ENCODE measurements at regions of chr6 and their contacts with region 1.

Region 1: GRCh38 chr6:137866914-137867684 is at the start of gene TNFAIP3:
- DNase-seq: peak; percentile 91 to 98 (median 95)
- ATAC-seq: peak; percentile 72
- H3K4me3 ChIP-seq: peak within 1 kb of the TSS; percentile 75 to 79
- H3K4me3 Mint-ChIP-seq: peak within 1 kb of the TSS; percentile 98
- H3K27ac ChIP-seq: peak within 1 kb of the TSS; percentile 95 to 96
- H3K27ac Mint-ChIP-seq: peak within 1 kb of the TSS; percentile 99
- H3K4me1 ChIP-seq: peaks cover 43% of the 10 kb centered on the region
- H3K4me1 Mint-ChIP-seq: peaks cover 47% of the 10 kb centered on the region
- H3K27me3 ChIP-seq: no peaks in the 10 kb centered on the region
- H3K27me3 Mint-ChIP-seq: no peaks in the 10 kb centered on the region
- CTCF ChIP-seq: peak; percentile 69
- total RNA-seq, gene TNFAIP3: 3,739 to 3,807 TPM

Region 2: GRCh38 chr6:136685540-136686108 is 1181.5 kb before region 1 on chr6:
- CTCF ChIA-PET with region 1: no interaction called
- POLR2A ChIA-PET with region 1: no interaction called
- intact Hi-C with region 1: no loop called
- DNase-seq: no peak
- ATAC-seq: no peak
- H3K4me3 ChIP-seq: no peak overlapping the region
- H3K4me3 Mint-ChIP-seq: no peak overlapping the region
- H3K27ac ChIP-seq: no peak overlapping the region
- H3K27ac Mint-ChIP-seq: peak overlapping the region; percentile 45
- H3K4me1 ChIP-seq: no peaks in the 10 kb centered on the region
- H3K4me1 Mint-ChIP-seq: peaks cover 7% of the 10 kb centered on the region
- H3K27me3 ChIP-seq: no peaks in the 10 kb centered on the region
- H3K27me3 Mint-ChIP-seq: no peaks in the 10 kb centered on the region
- CTCF ChIP-seq: no peak

Region 3: DNA sequence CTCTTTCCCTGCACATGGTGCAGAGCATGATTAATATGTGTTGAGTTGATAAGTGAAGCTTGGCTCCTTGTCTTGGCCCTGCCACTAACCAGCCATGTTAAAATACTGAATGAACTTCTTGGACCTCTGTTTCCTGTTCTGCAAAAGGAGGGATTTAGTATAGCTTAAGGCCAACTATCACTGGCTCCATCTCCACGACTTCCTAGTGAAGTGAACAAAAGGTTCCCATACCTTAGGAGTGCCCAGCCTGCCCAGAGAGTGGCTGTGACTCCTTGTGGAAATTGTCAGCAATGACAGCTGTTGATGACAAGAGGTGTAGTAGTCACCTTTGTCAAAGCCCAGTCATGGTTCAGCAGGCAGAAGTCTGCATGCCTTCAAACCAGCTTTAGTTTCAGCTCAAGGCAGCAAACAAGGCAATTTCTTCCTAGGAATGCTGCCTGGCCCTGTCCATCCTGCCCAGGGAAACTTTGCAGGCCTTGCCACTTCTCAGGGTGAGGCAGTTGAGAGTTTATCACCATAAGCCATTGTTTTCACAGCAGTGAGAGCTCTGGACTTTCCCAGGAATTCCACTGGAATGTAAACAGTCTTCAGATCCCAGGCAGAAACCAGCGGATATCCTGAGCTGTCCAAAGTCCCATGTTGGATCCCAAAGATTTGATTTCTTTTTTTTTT is 169.7 kb before region 1 on chr6:
- CTCF ChIA-PET with region 1: no interaction called
- POLR2A ChIA-PET with region 1: no interaction called
- intact Hi-C with region 1: no loop called
- DNase-seq: no peak
- ATAC-seq: no peak
- H3K4me3 ChIP-seq: no peak overlapping the region
- H3K4me3 Mint-ChIP-seq: no peak overlapping the region
- H3K27ac ChIP-seq: no peak overlapping the region
- H3K27ac Mint-ChIP-seq: no peak overlapping the region
- H3K4me1 ChIP-seq: peaks cover 12% of the 10 kb centered on the region
- H3K4me1 Mint-ChIP-seq: peaks cover 14% of the 10 kb centered on the region
- H3K27me3 ChIP-seq: no peaks in the 10 kb centered on the region
- H3K27me3 Mint-ChIP-seq: peaks cover 2% of the 10 kb centered on the region
- CTCF ChIP-seq: no peak

Region 4: DNA sequence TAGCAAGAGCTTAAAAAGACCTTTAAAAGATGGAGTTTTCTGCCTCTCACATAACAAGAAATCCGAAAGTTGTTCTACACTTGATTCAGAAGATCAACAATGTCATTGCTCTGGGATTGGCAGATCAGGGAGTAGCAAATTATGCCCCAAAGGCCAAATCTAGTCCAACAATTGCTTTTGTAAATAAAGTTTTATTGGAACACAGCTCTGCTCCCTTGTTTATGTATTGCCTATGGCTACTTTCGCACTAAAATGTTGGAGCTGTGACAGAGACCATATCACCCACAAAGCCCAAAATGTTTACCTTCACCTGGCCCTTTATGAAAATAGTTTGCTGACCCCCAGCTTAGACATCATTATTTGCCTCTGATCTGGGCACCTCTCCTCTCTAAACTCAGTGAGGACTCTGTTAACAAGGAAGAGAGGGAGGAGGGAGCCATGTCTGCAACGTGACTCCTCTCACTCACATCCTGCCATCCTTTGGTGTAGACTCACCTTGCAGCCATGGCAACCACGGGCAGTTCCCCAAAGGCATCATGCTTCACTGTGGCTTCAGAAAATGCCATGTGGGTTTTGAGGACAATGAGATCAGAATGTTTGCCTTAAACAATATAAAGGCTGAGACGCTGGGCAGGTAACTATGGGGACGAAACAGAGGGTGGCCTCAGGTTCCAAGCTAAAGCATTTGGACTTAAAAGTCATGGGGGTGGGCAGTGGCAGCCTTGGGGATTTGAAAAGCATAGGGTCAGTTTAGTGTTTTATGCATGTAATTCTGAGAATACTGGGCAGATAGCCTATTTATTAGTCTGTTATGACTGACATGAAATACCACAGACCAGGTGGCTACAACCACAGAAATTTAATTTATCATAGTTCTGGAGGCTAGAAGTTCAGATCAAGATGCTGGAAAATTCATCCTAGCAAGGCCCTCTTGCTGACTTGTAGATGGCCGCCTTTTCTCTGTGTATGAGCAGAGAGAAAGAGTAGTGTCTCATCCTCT is 149.7 kb before region 1 on chr6:
- CTCF ChIA-PET with region 1: interaction called, 13 read pairs
- POLR2A ChIA-PET with region 1: interaction called, 19 read pairs
- intact Hi-C with region 1: no loop called
- DNase-seq: peak; percentile 57 to 95 (median 79)
- ATAC-seq: peak; percentile 50
- H3K4me3 ChIP-seq: no peak overlapping the region
- H3K4me3 Mint-ChIP-seq: peak overlapping the region; percentile 46
- H3K27ac ChIP-seq: peak overlapping the region; percentile 5 to 16
- H3K27ac Mint-ChIP-seq: peak overlapping the region; percentile 95
- H3K4me1 ChIP-seq: peaks cover 28% of the 10 kb centered on the region
- H3K4me1 Mint-ChIP-seq: peaks cover 47% of the 10 kb centered on the region
- H3K27me3 ChIP-seq: no peaks in the 10 kb centered on the region
- H3K27me3 Mint-ChIP-seq: no peaks in the 10 kb centered on the region
- CTCF ChIP-seq: no peak

Region 5: GRCh38 chr6:137823826-137824555 is 43.1 kb before region 1 on chr6:
- CTCF ChIA-PET with region 1: interaction called, 13 read pairs
- POLR2A ChIA-PET with region 1: interaction called, 32 read pairs
- intact Hi-C with region 1: loop called (anchors 1 kb)
- DNase-seq: peak; percentile 54 to 98 (median 82)
- ATAC-seq: peak; percentile 71
- H3K4me3 ChIP-seq: peak overlapping the region; percentile 1 to 39
- H3K4me3 Mint-ChIP-seq: peak overlapping the region; percentile 59
- H3K27ac ChIP-seq: peak overlapping the region; percentile 91 to 99
- H3K27ac Mint-ChIP-seq: peak overlapping the region; percentile 97
- H3K4me1 ChIP-seq: peaks cover 75% of the 10 kb centered on the region
- H3K4me1 Mint-ChIP-seq: peaks cover 74% of the 10 kb centered on the region
- H3K27me3 ChIP-seq: no peaks in the 10 kb centered on the region
- H3K27me3 Mint-ChIP-seq: no peaks in the 10 kb centered on the region
- CTCF ChIP-seq: no peak

Region 6: DNA sequence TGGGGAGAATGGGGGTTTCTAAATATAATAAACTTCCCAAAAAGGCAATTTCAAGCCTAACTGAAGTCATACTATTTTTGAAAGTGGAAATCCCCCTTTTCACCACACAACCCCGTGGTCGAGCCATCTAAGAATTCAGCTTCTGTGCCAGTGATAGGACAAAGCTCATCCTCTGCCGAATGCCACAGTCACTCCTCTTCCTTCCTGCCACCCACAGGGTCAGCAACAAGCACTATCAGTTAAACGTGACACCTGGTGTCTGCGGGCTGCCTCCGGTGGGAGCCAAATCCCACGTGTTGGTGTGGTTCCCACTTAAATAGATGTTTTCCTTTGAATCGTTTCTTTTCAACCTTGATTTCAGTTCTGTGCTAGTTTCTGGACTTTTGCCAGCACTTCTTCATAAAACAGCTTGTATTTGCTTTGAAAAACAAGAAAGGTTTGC is 60.7 kb after region 1 on chr6:
- CTCF ChIA-PET with region 1: interaction called, 7 read pairs
- POLR2A ChIA-PET with region 1: interaction called, 9 read pairs
- intact Hi-C with region 1: loop called in 1 of 2 experiments (anchors 1 kb)
- DNase-seq: peak; percentile 49 to 95 (median 75)
- ATAC-seq: peak; percentile 99
- H3K4me3 ChIP-seq: no peak overlapping the region
- H3K4me3 Mint-ChIP-seq: peak overlapping the region; percentile 36
- H3K27ac ChIP-seq: peak overlapping the region; percentile 21 to 59
- H3K27ac Mint-ChIP-seq: peak overlapping the region; percentile 91
- H3K4me1 ChIP-seq: peaks cover 38% of the 10 kb centered on the region
- H3K4me1 Mint-ChIP-seq: peaks cover 41% of the 10 kb centered on the region
- H3K27me3 ChIP-seq: no peaks in the 10 kb centered on the region
- H3K27me3 Mint-ChIP-seq: no peaks in the 10 kb centered on the region
- CTCF ChIP-seq: no peak

Region 7: DNA sequence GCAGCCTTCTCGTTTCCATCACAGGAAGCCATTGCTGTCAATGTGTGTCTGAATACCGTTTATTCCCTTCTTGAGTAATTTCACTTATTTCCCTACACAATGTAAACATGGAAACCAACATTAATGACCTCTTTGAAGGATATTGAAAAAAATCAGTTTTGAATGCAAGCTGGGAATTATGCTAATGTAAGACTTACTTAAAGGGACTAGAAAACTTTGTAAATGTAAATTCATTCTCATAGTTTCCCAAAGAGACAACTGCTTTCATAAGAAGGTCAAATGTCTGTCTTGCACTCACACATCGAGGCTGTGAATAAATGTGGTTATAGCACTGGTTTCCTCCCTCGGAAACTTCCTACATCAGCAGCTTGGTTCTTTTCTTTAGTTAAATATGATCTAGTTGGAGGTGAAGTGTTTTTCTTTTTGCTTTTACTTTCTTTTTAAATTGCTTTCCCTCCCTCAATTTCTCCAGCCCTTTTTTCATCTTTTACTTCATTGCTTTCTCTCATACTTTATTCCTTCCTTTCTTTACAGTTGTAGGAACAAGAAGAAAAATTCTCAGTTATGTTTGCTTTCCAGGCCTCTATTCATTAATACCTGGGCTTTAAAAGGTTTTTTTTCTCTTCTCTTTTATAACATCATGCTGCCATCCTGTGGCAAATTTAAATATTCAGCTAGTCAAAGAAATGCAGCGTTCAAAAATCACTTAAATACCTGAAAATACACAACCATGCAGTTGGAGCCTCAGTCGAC is 108.3 kb after region 1 on chr6:
- CTCF ChIA-PET with region 1: interaction called, 17 read pairs
- POLR2A ChIA-PET with region 1: interaction called, 12 read pairs
- intact Hi-C with region 1: loop called (anchors 1 kb)
- DNase-seq: peak in 5 of 9 experiments; percentile 19 to 89 (median 38)
- ATAC-seq: peak; percentile 80
- H3K4me3 ChIP-seq: peak overlapping the region; percentile 18 to 21
- H3K4me3 Mint-ChIP-seq: peak overlapping the region; percentile 74
- H3K27ac ChIP-seq: peak overlapping the region; percentile 39 to 85
- H3K27ac Mint-ChIP-seq: peak overlapping the region; percentile 92
- H3K4me1 ChIP-seq: peaks cover 24% of the 10 kb centered on the region
- H3K4me1 Mint-ChIP-seq: peaks cover 40% of the 10 kb centered on the region
- H3K27me3 ChIP-seq: no peaks in the 10 kb centered on the region
- H3K27me3 Mint-ChIP-seq: no peaks in the 10 kb centered on the region
- CTCF ChIP-seq: peak; percentile 75

Region 8: DNA sequence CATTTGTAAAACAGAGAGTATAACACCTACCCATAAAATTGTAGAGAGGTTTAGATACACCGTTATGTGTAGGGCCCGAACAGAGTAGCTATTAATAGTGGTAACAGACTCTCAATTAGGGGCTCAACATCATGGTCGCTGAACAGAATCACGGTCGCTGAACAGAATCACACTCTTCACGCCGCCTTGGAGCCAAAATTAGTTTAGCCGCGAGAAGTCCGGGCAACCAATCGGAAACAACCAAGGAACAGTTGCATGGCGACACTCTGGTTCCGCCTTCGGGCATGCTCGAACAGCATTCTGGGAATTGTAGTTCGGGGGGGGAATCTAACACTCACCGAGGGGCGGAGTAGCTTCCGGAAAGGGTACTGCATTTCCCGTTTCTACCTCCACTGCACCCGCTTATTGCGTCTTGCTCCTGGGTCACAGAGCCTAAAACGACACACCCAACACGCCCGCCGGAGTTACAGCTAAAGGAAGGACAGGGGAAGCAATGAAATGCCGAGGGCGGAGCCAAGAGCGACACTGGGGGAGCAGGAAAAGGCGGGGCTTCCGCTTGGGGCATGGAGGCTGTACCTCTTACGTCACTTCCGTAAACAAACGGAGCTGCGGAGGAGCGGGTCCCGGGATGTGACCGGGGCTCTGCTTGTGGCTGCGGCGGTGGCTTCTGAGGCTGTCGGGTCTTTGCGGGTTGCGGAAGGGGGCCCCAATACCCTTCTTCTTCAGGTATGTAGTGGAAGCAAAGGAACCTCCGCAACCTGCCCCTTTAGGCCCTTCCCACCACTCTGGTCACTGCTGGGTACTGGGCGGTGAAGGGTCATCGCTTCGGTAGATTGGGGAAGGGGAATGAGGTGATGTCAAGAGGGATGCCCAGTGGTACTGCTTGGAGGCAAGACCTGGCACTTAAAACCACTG is 906.3 kb after region 1 on chr6 and contains the start of gene CCDC28A:
- CTCF ChIA-PET with region 1: no interaction called
- POLR2A ChIA-PET with region 1: no interaction called
- intact Hi-C with region 1: loop called in 1 of 2 experiments (anchors 5 kb)
- DNase-seq: peak; percentile 87 to 97 (median 92)
- ATAC-seq: peak; percentile 84
- H3K4me3 ChIP-seq: peak within 1 kb of the TSS; percentile 68 to 90
- H3K4me3 Mint-ChIP-seq: peak within 1 kb of the TSS; percentile 100
- H3K27ac ChIP-seq: peak within 1 kb of the TSS; percentile 88 to 96
- H3K27ac Mint-ChIP-seq: peak within 1 kb of the TSS; percentile 100
- H3K4me1 ChIP-seq: peaks cover 19% of the 10 kb centered on the region
- H3K4me1 Mint-ChIP-seq: peaks cover 33% of the 10 kb centered on the region
- H3K27me3 ChIP-seq: no peaks in the 10 kb centered on the region
- H3K27me3 Mint-ChIP-seq: no peaks in the 10 kb centered on the region
- CTCF ChIP-seq: no peak
- total RNA-seq, gene CCDC28A: 38.2 to 39.4 TPM